Activated T-helper 2 cell treated with anti-CD3 and anti-CD28 coated beads, Interferon-gamma antibody, Interleukin-2, Interleukin-4, amounts not matched to agents 10 μg/mL and 5 μg/mL and 100 μg/mL, durations not matched to agents 14 hours and 24 hours and 36 hours (primary cell): ENCODE measurements at regions of chr9 and their contacts with region 1.

Region 1: DNA sequence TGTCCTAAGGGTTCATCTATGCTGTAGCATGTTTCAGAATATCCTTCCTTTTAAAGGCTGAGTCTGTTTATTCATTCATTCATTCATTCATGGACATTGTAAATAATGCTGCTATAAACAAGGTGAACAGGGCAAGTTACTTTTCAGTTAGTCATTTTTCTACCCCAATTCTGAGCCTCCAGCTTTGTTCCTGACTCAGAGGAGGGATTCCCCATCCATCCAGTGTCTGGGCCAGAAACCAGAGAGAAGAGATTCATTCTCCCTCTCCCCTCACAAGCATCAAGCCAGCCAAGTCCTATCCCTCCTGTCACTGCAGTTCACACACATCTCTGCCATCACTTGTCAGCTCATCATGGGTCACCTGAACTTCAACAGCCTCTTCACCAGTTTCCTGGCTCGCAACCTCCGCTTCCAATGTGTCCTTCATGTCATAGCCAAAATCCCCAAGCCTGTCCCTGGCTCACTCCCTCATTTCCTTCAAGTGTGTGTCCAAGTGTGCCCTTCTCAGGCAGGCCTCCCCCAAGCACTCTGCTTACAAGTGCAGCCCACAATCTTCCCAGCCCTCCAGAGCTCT is 203.0 kb downstream of the TTLL11 start:
- DNase-seq: no peak
- H3K4me3 Mint-ChIP-seq: no peak overlapping the region
- H3K27ac Mint-ChIP-seq: no peak overlapping the region
- H3K4me1 Mint-ChIP-seq: peaks cover 19% of the 10 kb centered on the region
- H3K27me3 Mint-ChIP-seq: no peaks in the 10 kb centered on the region

Region 2: DNA sequence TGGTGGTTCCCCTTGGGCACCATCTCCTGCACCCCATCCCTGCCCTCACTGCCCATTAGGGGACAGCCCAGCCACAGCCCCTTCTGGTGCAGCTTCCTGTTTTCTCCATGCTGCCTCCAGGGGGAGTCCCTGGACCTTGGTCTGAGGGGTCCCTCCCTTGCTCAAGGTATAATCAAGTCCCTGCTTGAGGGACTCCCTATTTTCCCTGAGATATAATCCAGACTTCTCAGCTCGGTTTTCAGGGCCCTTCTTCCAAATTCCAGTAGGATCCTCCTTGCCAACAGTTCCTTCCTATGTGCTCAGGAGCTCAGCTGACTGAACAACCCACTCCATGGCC is 269.0 kb before region 1 on chr9:
- intact Hi-C with region 1: no loop called
- DNase-seq: no peak
- H3K4me3 Mint-ChIP-seq: no peak overlapping the region
- H3K27ac Mint-ChIP-seq: no peak overlapping the region
- H3K4me1 Mint-ChIP-seq: no peaks in the 10 kb centered on the region
- H3K27me3 Mint-ChIP-seq: no peaks in the 10 kb centered on the region

Region 3: GRCh38 chr9:121698627-121699570 is 191.2 kb before region 1 on chr9:
- intact Hi-C with region 1: no loop called
- DNase-seq: peak; percentile 59
- H3K4me3 Mint-ChIP-seq: no peak overlapping the region
- H3K27ac Mint-ChIP-seq: no peak overlapping the region
- H3K4me1 Mint-ChIP-seq: peaks cover 4% of the 10 kb centered on the region
- H3K27me3 Mint-ChIP-seq: peaks cover 52% of the 10 kb centered on the region

Region 4: DNA sequence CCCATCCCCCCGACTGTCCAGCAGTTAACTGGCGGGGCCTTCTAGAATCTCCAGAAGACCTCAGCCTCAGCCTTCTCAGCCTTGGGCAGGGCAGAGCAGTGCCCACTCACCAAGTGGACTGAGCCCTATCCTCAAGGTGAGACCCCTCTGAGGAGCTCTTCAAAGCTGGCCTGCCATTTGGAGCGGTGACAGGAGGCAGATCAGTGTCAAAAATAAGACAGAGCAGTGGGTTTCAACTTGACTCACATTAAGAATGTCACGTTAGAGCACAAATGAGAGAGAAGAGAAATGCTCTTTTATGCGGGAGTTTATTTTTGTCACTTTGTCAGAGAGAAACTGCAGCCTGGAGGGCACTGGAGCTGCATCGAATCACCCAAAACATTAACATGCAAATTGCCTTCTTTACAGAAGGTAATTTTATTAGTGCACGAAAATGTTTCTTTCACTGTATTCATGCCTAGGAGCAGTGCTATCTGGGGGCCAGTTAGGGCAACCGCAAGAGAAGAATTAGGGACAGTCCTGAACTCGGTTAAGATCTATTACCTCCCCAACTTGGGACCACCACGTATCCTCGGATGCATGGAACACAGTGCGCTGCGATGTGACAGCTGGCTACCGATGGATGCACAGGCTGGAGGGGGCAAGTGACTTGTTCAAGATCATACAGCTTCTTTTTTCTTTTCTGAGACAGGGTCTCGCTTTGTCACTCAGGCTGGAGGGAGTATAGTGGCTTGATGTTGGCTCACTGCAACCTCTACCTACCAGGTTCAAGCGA is 50.2 kb before region 1 on chr9:
- intact Hi-C with region 1: no loop called
- DNase-seq: no peak
- H3K4me3 Mint-ChIP-seq: no peak overlapping the region
- H3K27ac Mint-ChIP-seq: no peak overlapping the region
- H3K4me1 Mint-ChIP-seq: no peaks in the 10 kb centered on the region
- H3K27me3 Mint-ChIP-seq: peaks cover 1% of the 10 kb centered on the region

Region 5: DNA sequence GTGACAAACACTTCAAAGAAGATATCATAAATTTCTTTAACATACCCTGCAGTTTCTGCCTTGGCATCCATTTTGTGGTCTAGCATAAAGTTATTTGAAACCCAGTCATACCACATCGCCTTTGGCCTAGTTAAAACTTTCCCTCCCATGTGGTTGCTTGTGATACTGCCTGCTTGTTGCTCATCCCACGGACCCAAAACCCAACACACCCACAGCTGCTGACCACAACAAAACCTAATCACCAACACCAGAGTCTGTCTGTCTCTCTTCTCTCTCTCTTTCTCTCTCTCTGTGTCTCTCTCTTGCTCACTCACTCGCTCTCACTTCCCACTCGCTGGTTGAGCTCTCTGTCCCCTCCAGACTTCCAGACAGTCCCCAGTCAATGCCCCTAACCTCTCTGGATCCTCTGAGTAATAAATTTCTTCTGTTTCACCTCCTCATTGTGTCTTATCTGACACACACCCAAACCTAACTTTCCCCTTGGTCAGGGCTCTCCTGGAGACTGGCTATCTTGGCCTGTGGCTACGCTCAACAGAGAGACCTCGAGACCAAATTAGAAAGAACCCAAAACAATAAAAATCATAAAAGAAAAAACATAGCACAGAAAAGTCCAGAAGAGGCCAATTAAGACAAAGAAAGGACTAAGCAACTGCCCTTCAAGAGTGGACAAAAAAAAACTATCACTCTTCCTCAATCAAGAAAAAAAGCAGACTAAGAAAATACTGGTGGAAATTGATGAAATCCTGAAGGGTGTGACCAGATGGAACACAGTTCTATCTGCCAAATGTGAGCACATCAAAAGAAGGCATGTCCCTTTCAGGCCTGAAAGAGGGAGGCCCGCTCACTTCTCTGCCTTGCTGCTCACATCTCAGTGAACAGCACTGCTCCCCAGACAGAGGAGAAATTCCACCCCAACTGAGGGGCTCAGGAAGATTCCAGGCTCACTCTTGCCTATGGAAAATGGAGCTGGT is 161.6 kb after region 1 on chr9:
- intact Hi-C with region 1: loop called (anchors 5 kb)
- DNase-seq: no peak
- H3K4me3 Mint-ChIP-seq: no peak overlapping the region
- H3K27ac Mint-ChIP-seq: peak overlapping the region; percentile 23
- H3K4me1 Mint-ChIP-seq: peaks cover 12% of the 10 kb centered on the region
- H3K27me3 Mint-ChIP-seq: peaks cover 21% of the 10 kb centered on the region

Region 6: GRCh38 chr9:122356627-122357026 is 466.6 kb after region 1 on chr9:
- intact Hi-C with region 1: no loop called
- DNase-seq: no peak
- H3K4me3 Mint-ChIP-seq: no peak overlapping the region
- H3K27ac Mint-ChIP-seq: no peak overlapping the region
- H3K4me1 Mint-ChIP-seq: peaks cover 4% of the 10 kb centered on the region
- H3K27me3 Mint-ChIP-seq: peaks cover 9% of the 10 kb centered on the region